ENCODE measurements at regions of chr7 and their contacts with region 1.

Region 1: DNA sequence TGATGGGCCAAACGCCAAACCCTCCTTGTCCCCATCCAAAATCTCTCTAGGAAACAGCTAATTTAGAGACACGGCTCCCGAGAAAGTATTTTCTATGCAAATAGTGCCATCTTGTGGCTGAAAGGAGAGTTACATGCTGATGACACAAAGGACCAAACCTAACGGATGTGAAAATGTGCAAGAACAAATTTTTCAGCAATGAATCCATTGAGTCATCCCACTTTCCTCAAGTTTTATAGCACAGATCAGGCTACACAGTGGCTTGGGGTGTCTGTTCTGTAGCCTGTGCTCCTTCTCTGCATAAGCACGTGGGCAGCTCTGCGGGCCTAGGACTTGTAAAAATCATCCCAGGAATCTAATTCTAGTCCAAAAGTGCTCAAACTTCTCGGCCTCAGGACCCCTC is 154.8 kb upstream of the PRR15 start:
- DNase-seq: peak; percentile 58
- ATAC-seq: peak; percentile 82
- H3K4me3 ChIP-seq: no peak overlapping the region
- H3K27ac ChIP-seq: no peak overlapping the region
- H3K4me1 ChIP-seq: no peaks in the 10 kb centered on the region
- H3K27me3 ChIP-seq: peaks cover 19% of the 10 kb centered on the region
- CTCF ChIP-seq: peak; percentile 86

Region 2: DNA sequence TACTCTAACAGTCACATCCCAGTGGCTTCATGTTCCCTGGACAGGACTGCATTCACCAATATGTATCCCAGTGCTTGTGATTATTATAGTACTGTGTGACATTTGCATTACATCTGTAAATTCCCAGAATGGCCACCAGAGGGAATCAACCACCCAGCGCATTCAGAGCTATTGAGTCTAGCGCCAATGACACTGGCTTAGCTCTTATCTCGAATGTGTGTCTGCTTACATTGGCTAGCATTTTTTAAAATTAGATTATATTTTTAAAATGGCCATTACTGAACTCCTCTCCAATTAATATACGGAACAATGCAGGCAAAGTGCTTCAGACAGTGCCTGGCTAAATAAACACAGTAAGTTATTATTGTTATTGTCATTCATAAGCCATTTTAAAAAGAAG is 487.0 kb before region 1 on chr7:
- CTCF ChIA-PET with region 1: interaction called, 18 read pairs
- POLR2A ChIA-PET with region 1: no interaction called
- in situ Hi-C with region 1: no loop called
- intact Hi-C with region 1: loop called (anchors 1 kb)
- DNase-seq: peak; percentile 53
- ATAC-seq: peak; percentile 97
- H3K4me3 ChIP-seq: no peak overlapping the region
- H3K27ac ChIP-seq: no peak overlapping the region
- H3K4me1 ChIP-seq: peaks cover 3% of the 10 kb centered on the region; the same call in 1 of the 2 replicates
- H3K27me3 ChIP-seq: peaks cover 28% of the 10 kb centered on the region
- CTCF ChIP-seq: peak; percentile 89

Region 3: DNA sequence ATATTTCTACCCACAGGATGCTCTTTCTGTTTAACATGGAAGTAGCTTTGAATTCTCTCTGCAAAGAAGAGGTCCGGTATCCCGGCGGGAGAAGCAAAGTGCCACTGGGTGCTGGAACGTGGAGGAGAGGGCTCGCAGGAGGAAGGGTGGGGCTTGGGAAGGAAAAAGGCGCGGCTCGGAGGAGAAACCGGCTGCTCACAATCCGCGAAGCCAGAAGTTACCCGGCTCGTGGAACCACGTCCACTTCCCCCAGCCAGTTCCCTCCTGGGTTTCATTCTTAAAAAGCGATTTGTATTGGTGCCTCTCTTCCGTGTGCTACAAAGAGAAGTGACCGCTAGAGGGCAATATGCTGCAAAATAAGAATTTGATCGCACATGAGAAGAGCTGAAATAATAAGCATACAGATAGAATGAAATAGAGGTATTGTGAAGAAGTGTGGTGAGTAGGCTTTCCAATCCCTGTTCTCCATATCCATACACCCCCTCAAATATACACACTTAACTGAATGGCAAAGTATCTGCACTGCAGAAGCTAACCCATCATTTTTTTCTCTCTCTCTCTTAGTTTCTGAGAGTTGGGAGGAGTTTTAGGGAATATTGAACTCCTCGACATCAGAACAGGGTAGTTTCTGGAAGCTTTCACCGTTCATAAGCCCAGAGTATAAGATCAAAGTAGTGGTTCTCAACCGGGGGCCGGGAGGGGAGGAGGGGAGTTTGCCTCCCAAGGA is 481.8 kb before region 1 on chr7:
- CTCF ChIA-PET with region 1: interaction called, 18 read pairs
- POLR2A ChIA-PET with region 1: no interaction called
- in situ Hi-C with region 1: no loop called
- intact Hi-C with region 1: loop called (anchors 1 kb)
- DNase-seq: peak; percentile 50
- ATAC-seq: peak; percentile 91
- H3K4me3 ChIP-seq: peak overlapping the region; percentile 40 to 58
- H3K27ac ChIP-seq: no peak overlapping the region
- H3K4me1 ChIP-seq: peaks cover 4% of the 10 kb centered on the region; the same call in 1 of the 2 replicates
- H3K27me3 ChIP-seq: peaks cover 26% of the 10 kb centered on the region
- CTCF ChIP-seq: peak; percentile 89

Region 4: DNA sequence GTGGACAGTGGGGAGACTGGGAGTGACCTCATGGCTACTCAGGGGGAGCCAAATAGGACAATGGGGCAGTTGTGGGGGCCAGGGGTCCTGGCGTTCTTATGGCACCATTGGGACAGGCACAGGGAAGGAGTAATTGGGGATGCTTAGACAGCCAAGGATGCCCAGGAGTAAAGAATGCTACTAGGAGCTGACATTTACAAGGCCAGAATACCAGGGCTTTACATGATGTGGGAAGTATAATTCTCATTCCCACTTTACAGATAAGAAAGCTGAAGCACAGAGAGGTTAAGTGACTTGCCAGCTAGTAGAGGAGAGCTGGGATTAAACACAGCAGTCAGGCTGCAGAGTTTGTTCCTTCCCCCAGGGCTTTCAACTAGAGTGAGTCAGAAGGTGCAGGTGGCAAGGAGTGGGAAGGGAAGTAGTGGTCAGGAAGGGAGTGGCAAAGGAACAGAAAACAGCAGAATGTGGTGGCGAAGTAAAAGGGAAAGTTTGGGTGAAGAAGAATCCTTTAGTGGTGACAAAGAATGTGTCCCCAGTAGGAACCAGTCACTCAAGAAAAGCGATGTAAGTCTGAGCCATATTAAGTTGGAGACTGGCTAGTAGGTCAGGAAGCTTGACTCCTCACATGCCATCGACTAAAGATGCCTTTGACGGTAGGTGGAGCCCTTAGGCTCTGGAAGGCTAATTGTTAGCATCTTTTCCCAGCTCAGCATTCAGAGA is 295.3 kb before region 1 on chr7:
- CTCF ChIA-PET with region 1: no interaction called
- POLR2A ChIA-PET with region 1: no interaction called
- in situ Hi-C with region 1: no loop called
- intact Hi-C with region 1: loop called (anchors 2 kb)
- DNase-seq: peak; percentile 13
- ATAC-seq: peak; percentile 78
- H3K4me3 ChIP-seq: no peak overlapping the region
- H3K27ac ChIP-seq: no peak overlapping the region
- H3K4me1 ChIP-seq: no peaks in the 10 kb centered on the region
- H3K27me3 ChIP-seq: peaks cover 31% of the 10 kb centered on the region
- CTCF ChIP-seq: peak; percentile 71

Region 5: GRCh38 chr7:29189743-29190201 is 219.1 kb before region 1 on chr7:
- CTCF ChIA-PET with region 1: interaction called, 9 read pairs
- POLR2A ChIA-PET with region 1: no interaction called
- in situ Hi-C with region 1: no loop called
- intact Hi-C with region 1: loop called (anchors 5 kb)
- DNase-seq: peak; percentile 10
- ATAC-seq: peak; percentile 87
- H3K4me3 ChIP-seq: no peak overlapping the region
- H3K27ac ChIP-seq: no peak overlapping the region
- H3K4me1 ChIP-seq: no peaks in the 10 kb centered on the region
- H3K27me3 ChIP-seq: peaks cover 35% of the 10 kb centered on the region
- CTCF ChIP-seq: peak; percentile 97

Region 6: GRCh38 chr7:29224726-29225125 is 184.1 kb before region 1 on chr7:
- CTCF ChIA-PET with region 1: no interaction called
- POLR2A ChIA-PET with region 1: no interaction called
- in situ Hi-C with region 1: no loop called
- intact Hi-C with region 1: no loop called
- DNase-seq: no peak
- ATAC-seq: no peak
- H3K4me3 ChIP-seq: no peak overlapping the region
- H3K27ac ChIP-seq: no peak overlapping the region
- H3K4me1 ChIP-seq: no peaks in the 10 kb centered on the region
- H3K27me3 ChIP-seq: peaks cover 4% of the 10 kb centered on the region; the same call in 1 of the 2 replicates
- CTCF ChIP-seq: no peak

Region 7: DNA sequence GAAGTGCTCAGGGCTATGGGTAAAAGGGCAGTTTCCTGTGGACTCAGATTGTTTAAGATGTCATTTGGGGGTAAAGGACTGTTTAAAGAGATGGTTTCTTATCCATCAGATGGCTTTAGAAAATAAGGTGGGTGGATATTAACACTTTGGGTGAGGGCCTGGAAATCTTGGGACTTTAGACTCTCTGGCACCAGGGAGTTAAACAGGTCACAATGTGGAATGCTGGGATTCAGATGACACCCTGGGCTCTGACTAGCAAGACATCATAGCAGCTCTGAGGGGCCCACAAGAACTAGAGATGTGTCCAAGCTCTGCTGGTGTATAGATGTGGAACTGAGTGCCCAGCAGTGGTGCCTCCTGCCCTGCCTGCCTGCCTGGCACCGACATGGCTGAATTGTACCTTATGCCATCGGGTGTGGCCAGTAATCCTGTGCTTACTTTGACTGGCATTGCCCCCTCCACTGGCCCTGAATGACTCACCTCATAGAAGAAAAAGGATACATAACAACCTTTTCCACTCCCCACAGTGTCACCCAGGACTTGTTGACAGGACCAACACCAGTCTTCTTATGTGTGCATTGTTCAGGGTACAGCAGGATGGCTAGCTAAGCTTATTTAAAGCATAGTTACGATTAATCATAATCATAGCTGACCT is 54.8 kb after region 1 on chr7:
- CTCF ChIA-PET with region 1: no interaction called
- POLR2A ChIA-PET with region 1: no interaction called
- in situ Hi-C with region 1: no loop called
- intact Hi-C with region 1: no loop called
- DNase-seq: no peak
- ATAC-seq: no peak
- H3K4me3 ChIP-seq: no peak overlapping the region
- H3K27ac ChIP-seq: no peak overlapping the region
- H3K4me1 ChIP-seq: no peaks in the 10 kb centered on the region
- H3K27me3 ChIP-seq: peaks cover 35% of the 10 kb centered on the region
- CTCF ChIP-seq: no peak

Region 8: DNA sequence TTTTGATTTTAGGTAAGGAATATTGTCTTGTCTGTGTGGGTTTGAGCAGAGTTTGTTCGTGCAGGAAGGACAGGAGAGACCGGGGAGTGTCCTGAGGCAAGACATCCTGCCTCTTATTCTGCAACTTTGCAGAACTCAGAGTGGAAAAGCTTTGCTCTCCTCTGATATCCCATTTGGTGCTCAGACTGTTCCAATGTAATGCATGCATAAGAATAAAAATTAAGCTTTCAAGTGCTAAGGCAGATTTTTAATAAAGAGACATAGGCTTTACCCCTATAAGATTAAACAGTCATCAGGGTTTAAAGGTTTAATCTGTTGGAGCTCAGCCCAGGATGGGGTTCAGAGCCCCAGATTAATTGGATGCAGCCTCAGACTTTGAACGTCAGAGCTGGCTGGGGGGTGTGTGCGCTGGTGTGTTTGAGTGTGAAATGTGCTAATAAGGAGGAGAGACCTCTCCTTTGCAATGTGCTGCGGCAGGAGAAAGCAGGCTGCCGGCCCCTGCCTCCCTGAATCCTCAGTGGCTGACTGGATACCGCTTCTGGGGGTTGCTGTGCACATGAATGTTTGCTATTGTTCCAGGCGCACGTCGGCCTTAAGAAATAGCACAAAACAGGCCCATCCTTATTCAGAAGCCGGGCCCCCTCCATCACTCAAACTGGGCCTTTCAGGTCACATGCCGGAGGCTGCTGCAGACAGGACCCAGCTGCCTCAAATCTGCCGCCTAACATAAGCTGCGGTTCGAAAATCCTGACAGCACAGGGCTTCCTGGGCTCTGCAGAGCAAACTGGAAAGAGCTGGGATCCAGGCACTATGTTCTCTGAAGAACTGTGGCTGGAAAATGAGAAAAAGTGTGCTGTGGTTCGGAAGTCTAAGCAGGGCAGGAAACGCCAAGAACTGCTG is 70.7 kb after region 1 on chr7:
- CTCF ChIA-PET with region 1: no interaction called
- POLR2A ChIA-PET with region 1: no interaction called
- in situ Hi-C with region 1: no loop called
- intact Hi-C with region 1: no loop called
- DNase-seq: no peak
- ATAC-seq: no peak
- H3K4me3 ChIP-seq: no peak overlapping the region
- H3K27ac ChIP-seq: no peak overlapping the region
- H3K4me1 ChIP-seq: no peaks in the 10 kb centered on the region
- H3K27me3 ChIP-seq: peaks cover 8% of the 10 kb centered on the region
- CTCF ChIP-seq: no peak

Region 9: GRCh38 chr7:29496355-29497020 is 87.6 kb after region 1 on chr7:
- CTCF ChIA-PET with region 1: no interaction called
- POLR2A ChIA-PET with region 1: no interaction called
- in situ Hi-C with region 1: no loop called
- intact Hi-C with region 1: no loop called
- DNase-seq: no peak
- ATAC-seq: no peak
- H3K4me3 ChIP-seq: no peak overlapping the region
- H3K27ac ChIP-seq: no peak overlapping the region
- H3K4me1 ChIP-seq: no peaks in the 10 kb centered on the region
- H3K27me3 ChIP-seq: no peaks in the 10 kb centered on the region; the same call in 1 of the 2 replicates
- CTCF ChIP-seq: no peak